ENCODE measurements at regions of chr5 and their contacts with region 1.

Region 1: DNA sequence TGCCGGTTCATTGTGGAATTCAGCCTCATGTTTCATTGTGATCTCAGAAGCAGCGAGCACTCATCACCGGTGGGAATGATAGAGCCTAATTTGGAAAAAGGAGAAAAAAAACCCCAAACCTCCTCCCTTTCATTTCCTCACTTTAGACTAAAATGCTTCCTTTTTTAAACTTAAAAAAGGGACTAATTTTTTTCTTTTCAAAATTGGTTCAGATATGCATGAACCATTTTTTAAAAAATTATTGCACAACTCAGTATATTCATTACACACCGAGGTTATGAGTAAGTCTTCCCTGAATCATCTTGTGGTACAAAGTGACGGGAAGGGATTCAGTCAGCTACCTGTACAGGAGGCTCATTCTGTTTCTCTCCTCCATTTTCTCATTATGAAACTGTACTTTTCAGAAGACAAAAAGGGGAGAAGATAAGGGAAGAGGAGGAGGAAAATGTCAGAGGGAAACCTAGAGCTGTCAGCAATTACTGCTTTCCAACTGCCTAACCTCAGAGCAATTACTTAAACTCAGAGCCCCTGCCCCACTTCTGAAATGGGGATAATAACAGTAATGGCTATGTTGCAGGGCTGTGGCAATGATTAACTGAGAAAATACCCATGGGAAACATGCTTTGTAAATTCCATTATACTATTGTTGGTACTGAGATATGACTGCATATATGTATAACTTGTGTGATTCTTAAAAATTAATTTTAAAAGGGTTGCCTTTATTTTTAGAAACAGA is 24.0 kb downstream of the GALNT10 start:
- DNase-seq: no peak
- H3K4me3 Mint-ChIP-seq: peak overlapping the region; percentile 47
- H3K27ac Mint-ChIP-seq: peak overlapping the region; percentile 86
- H3K4me1 Mint-ChIP-seq: peaks cover 53% of the 10 kb centered on the region
- H3K27me3 Mint-ChIP-seq: no peaks in the 10 kb centered on the region

Region 2: GRCh38 chr5:154196955-154197652 is 17.4 kb before region 1 on chr5:
- CTCF ChIA-PET with region 1: interaction called, 30 read pairs
- POLR2A ChIA-PET with region 1: interaction called, 5 read pairs
- intact Hi-C with region 1: loop called (anchors 1 kb)
- DNase-seq: no peak
- H3K4me3 Mint-ChIP-seq: no peak overlapping the region
- H3K27ac Mint-ChIP-seq: peak overlapping the region; percentile 65
- H3K4me1 Mint-ChIP-seq: peaks cover 71% of the 10 kb centered on the region
- H3K27me3 Mint-ChIP-seq: no peaks in the 10 kb centered on the region

Region 3: DNA sequence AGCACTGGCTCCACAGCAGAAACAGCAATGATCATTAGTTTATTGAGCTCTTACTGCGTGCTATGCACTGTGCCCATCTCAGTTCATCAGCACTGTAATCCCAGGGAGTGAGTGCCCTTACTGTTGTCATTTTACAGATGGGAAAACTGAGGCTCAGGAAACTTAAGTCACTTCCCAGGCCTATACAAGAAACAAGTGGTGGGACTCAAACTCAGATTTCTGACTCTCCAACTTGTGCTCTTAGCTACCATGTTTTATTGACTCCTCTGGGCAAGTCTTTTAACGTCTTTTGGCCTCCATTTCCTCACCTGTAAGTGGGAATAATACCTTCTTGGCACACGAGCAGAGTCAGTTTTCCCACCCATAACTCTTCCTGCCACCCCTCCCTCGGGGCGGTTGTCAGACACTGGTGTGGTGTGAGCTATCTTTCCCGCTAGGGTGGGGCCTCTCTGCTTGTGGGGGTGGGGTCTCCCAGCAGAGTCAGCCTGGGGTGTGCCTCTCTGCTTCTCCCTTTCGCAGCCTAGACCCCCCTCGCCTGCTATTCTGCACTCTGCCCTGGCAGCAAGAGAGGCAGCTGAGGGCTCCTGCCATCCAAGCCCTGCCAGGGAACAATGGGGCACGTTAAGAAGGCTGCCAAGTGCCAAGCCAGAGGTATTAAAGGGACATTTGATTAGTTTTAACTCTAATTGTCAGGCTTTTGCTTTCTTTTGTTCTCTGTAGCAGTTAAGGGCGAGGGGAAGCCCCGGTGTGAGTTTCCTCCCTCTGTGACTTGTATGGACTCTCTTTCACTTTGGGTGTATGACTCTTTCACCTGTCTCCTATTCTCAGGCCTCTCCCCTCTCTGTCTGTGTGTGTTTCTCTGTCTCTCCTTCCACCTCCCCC is 11.9 kb before region 1 on chr5:
- CTCF ChIA-PET with region 1: interaction called, 14 read pairs
- POLR2A ChIA-PET with region 1: interaction called, 5 read pairs
- intact Hi-C with region 1: loop called (anchors 1 kb)
- DNase-seq: peak; percentile 77
- H3K4me3 Mint-ChIP-seq: peak overlapping the region; percentile 39
- H3K27ac Mint-ChIP-seq: peak overlapping the region; percentile 72
- H3K4me1 Mint-ChIP-seq: peaks cover 60% of the 10 kb centered on the region
- H3K27me3 Mint-ChIP-seq: no peaks in the 10 kb centered on the region

Region 4: DNA sequence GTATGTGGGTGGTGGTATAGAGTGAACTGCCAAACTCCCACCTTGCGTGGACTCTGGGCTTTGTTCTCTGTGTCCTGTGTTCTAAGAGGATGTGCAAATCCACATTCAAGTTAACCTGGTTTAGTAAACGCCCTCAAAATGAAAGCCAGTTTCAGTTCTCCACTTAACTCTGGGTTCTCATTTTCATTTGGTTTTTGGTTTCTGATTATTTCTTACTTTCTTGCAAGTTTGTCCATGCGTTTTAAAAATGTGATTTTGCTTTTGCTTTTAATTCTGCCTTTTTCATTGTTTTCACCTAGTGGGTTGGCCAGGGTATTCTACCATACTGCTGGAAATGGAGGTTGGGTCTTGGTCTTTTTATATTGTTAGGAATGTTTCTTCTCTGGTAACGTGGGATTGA is 14.2 kb after region 1 on chr5:
- CTCF ChIA-PET with region 1: no interaction called
- POLR2A ChIA-PET with region 1: no interaction called
- intact Hi-C with region 1: loop called (anchors 1 kb)
- DNase-seq: no peak
- H3K4me3 Mint-ChIP-seq: peak overlapping the region; percentile 17
- H3K27ac Mint-ChIP-seq: peak overlapping the region; percentile 20
- H3K4me1 Mint-ChIP-seq: peaks cover 24% of the 10 kb centered on the region
- H3K27me3 Mint-ChIP-seq: no peaks in the 10 kb centered on the region

Region 5: GRCh38 chr5:154273028-154273617 is 58.6 kb after region 1 on chr5:
- CTCF ChIA-PET with region 1: no interaction called
- POLR2A ChIA-PET with region 1: no interaction called
- intact Hi-C with region 1: loop called (anchors 1 kb)
- DNase-seq: peak; percentile 29
- H3K4me3 Mint-ChIP-seq: no peak overlapping the region
- H3K27ac Mint-ChIP-seq: no peak overlapping the region
- H3K4me1 Mint-ChIP-seq: peaks cover 35% of the 10 kb centered on the region
- H3K27me3 Mint-ChIP-seq: no peaks in the 10 kb centered on the region

Region 6: DNA sequence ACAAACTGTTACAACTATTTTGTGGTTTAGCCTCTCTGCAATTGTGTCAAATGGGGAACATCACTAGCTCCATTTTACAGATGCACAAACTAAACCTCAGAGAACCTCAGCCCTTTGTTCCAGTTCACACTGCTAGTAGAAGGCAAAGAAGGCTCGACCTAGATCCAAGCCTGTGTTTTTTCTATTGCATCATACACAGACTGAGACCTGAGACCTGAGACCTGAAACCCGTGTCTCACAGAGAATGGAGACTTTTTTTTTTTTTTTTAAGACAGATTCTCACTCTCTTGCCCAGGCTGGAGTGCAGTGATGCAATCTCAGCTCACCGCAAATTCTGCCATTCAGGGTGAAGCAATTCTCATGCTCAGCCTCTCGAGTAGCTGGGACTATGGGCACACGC is 96.8 kb after region 1 on chr5:
- CTCF ChIA-PET with region 1: no interaction called
- POLR2A ChIA-PET with region 1: no interaction called
- intact Hi-C with region 1: loop called (anchors 1 kb)
- DNase-seq: peak; percentile 70
- H3K4me3 Mint-ChIP-seq: no peak overlapping the region
- H3K27ac Mint-ChIP-seq: peak overlapping the region; percentile 20
- H3K4me1 Mint-ChIP-seq: peaks cover 30% of the 10 kb centered on the region
- H3K27me3 Mint-ChIP-seq: no peaks in the 10 kb centered on the region